CD14-positive monocyte (primary cell): ENCODE measurements at regions of chr3 and their contacts with region 1.

Region 1: DNA sequence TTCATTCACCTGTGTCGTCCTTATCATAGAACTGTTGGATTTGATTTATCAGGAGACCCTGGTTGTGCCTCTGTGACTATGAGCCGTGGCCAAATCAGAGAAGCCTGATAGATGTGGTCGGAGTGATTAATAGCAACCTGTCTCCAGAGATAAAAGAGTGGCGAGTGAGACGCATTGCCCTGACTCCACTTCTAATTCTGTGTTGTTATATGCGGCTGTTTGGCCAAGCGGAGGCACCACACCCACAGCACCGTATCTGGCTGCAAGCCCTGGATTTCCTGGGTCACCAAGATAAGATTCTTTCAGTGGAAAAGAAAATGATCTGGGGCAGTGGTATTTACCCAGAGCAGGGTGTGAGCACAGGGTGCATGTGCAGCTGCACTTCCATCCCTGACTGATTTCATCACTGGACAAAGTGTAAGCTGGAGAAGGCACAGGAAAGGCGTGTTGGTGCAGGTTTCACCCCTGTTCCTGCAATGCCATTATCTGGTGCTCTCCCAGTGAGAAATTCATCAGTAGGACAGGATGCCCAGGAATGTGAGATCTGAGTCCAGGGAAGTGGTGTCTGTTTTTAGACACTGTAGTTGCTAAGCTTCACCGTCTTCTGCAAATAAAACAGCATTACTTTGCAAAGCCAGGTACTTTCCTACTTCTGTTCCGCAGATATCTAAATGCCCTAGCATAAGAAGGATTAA is 84.6 kb downstream of the CD47 start:
- DNase-seq: no peak
- H3K4me3 ChIP-seq: peak overlapping the region in 1 of 3 experiments; percentile 19
- H3K4me3 Mint-ChIP-seq: peak overlapping the region in 1 of 2 donors; percentile 86
- H3K27ac ChIP-seq: peak overlapping the region in 1 of 2 donors; percentile 44
- H3K27ac Mint-ChIP-seq: peak overlapping the region in 5 of 7 donors; percentile 42 to 76 (median 62)
- H3K4me1 ChIP-seq: peaks cover 52 to 55% of the 10 kb centered on the region in 2 donors
- H3K4me1 Mint-ChIP-seq: peaks cover 60% of the 10 kb centered on the region
- H3K27me3 ChIP-seq: no peaks in the 10 kb centered on the region
- H3K27me3 Mint-ChIP-seq: peaks cover 2 to 5% (median 4%) of the 10 kb centered on the region in 3 donors
- CTCF ChIP-seq: no peak

Region 2: DNA sequence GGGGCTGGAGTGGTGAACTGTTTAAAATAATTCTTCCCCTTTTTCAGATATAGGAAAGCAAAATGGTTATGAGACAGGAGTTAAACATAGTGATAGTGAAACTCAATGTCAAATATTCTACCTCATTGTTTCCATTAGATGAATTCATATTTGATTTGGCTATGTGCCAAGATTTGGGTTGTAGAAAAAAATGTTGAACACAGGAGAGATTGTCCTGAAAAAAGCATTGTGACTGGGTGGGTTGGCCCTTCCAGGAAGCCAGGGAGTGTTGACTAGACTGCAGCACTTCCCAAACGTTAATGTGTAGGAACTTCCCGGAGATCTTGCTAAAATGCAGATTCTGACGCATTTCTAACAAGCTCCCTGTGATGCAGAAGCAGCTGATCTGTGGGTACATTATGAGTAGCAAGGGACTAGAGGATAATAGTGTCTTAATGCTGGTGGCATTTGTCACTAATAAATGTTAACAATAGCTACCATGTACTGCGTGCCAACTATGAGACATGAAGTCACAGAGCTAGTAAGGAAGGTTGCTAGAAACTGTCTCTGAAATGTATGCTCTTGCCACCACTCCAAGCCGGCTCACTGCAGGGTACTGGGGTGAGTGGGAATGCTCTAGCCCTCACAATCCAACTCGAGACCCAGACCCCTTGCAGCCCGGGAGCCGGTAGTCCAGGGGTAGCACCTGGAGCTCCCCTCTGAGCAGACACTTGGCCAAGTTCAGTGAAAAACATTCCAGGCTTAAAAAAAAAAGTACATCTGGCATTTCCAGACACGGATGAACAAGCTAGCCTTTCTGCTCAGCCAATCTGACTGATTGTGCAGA is 36.0 kb before region 1 on chr3:
- intact Hi-C with region 1: loop called in 1 of 2 experiments (anchors 5 kb)
- DNase-seq: no peak
- H3K4me3 ChIP-seq: no peak overlapping the region
- H3K4me3 Mint-ChIP-seq: no peak overlapping the region
- H3K27ac ChIP-seq: no peak overlapping the region
- H3K27ac Mint-ChIP-seq: no peak overlapping the region
- H3K4me1 ChIP-seq: peaks cover 4 to 6% of the 10 kb centered on the region in 2 donors
- H3K4me1 Mint-ChIP-seq: peaks cover 16% of the 10 kb centered on the region
- H3K27me3 ChIP-seq: no peaks in the 10 kb centered on the region
- H3K27me3 Mint-ChIP-seq: peaks cover 0 to 7% (median 2%) of the 10 kb centered on the region in 3 donors
- CTCF ChIP-seq: no peak

Region 3: GRCh38 chr3:108202837-108203236 is 196.6 kb after region 1 on chr3:
- intact Hi-C with region 1: no loop called
- DNase-seq: no peak
- H3K4me3 ChIP-seq: no peak overlapping the region
- H3K4me3 Mint-ChIP-seq: no peak overlapping the region
- H3K27ac ChIP-seq: no peak overlapping the region
- H3K27ac Mint-ChIP-seq: no peak overlapping the region
- H3K4me1 ChIP-seq: no peaks in the 10 kb centered on the region
- H3K4me1 Mint-ChIP-seq: no peaks in the 10 kb centered on the region
- H3K27me3 ChIP-seq: no peaks in the 10 kb centered on the region
- H3K27me3 Mint-ChIP-seq: no peaks in the 10 kb centered on the region
- CTCF ChIP-seq: no peak